Activated naive CD4-positive, alpha-beta T cell treated with anti-CD3 and anti-CD28 coated beads, Interleukin-2, amount 10 ng/mL, durations not matched to agents 7 days and 5 days (primary cell): ENCODE measurements at regions of chr6 and their contacts with region 1.

Region 1: GRCh38 chr6:3848925-3849605 is at the start of gene FAM50B:
- DNase-seq: peak; percentile 94
- H3K4me3 Mint-ChIP-seq: peak within 1 kb of the TSS; percentile 76
- H3K27ac Mint-ChIP-seq: peak within 1 kb of the TSS; percentile 73
- H3K4me1 Mint-ChIP-seq: peaks cover 25% of the 10 kb centered on the region
- H3K27me3 Mint-ChIP-seq: no peaks in the 10 kb centered on the region

Region 2: DNA sequence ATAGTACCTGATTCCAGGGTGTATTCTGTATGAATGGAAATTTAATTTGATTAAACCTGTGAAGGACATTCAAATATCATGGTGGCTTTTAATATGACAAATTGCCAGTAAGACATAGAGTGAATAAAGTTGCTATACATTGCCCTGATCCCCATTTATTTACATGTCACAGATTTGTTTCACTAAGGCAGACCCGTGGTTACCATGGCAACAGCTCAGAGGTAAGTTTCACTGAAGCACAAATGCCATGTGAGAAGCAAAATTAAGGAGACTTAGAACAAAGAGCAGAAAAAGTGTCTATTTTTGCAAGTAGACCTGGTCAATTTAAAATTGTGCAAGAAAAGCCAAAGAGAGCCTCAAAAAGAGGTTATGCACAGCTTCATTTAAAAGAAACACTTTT is 161.2 kb before region 1 on chr6:
- CTCF ChIA-PET with region 1: no interaction called
- DNase-seq: no peak
- H3K4me3 Mint-ChIP-seq: no peak overlapping the region
- H3K27ac Mint-ChIP-seq: no peak overlapping the region
- H3K4me1 Mint-ChIP-seq: no peaks in the 10 kb centered on the region
- H3K27me3 Mint-ChIP-seq: peaks cover 10% of the 10 kb centered on the region

Region 3: GRCh38 chr6:3861424-3861823 is 12.4 kb after region 1 on chr6:
- CTCF ChIA-PET with region 1: interaction called, 11 read pairs
- DNase-seq: no peak
- H3K4me3 Mint-ChIP-seq: no peak overlapping the region
- H3K27ac Mint-ChIP-seq: no peak overlapping the region
- H3K4me1 Mint-ChIP-seq: no peaks in the 10 kb centered on the region
- H3K27me3 Mint-ChIP-seq: peaks cover 34% of the 10 kb centered on the region

Region 4: GRCh38 chr6:3938715-3939367 is 89.8 kb after region 1 on chr6:
- CTCF ChIA-PET with region 1: interaction called, 37 read pairs
- DNase-seq: no peak
- H3K4me3 Mint-ChIP-seq: no peak overlapping the region
- H3K27ac Mint-ChIP-seq: no peak overlapping the region
- H3K4me1 Mint-ChIP-seq: no peaks in the 10 kb centered on the region
- H3K27me3 Mint-ChIP-seq: peaks cover 42% of the 10 kb centered on the region

Region 5: GRCh38 chr6:4008324-4009047 is 159.4 kb after region 1 on chr6:
- CTCF ChIA-PET with region 1: no interaction called
- DNase-seq: no peak
- H3K4me3 Mint-ChIP-seq: no peak overlapping the region
- H3K27ac Mint-ChIP-seq: no peak overlapping the region
- H3K4me1 Mint-ChIP-seq: peaks cover 43% of the 10 kb centered on the region
- H3K27me3 Mint-ChIP-seq: no peaks in the 10 kb centered on the region